ENCODE measurements at regions of chr9 and their contacts with region 1.

Region 1: GRCh38 chr9:111037381-111038305 is 627 bp downstream of the LPAR1 start:
- DNase-seq: no peak
- H3K4me3 Mint-ChIP-seq: no peak overlapping the region
- H3K27ac Mint-ChIP-seq: no peak overlapping the region
- H3K4me1 Mint-ChIP-seq: peaks cover 10% of the 10 kb centered on the region
- H3K27me3 Mint-ChIP-seq: peaks cover 32% of the 10 kb centered on the region

Region 2: DNA sequence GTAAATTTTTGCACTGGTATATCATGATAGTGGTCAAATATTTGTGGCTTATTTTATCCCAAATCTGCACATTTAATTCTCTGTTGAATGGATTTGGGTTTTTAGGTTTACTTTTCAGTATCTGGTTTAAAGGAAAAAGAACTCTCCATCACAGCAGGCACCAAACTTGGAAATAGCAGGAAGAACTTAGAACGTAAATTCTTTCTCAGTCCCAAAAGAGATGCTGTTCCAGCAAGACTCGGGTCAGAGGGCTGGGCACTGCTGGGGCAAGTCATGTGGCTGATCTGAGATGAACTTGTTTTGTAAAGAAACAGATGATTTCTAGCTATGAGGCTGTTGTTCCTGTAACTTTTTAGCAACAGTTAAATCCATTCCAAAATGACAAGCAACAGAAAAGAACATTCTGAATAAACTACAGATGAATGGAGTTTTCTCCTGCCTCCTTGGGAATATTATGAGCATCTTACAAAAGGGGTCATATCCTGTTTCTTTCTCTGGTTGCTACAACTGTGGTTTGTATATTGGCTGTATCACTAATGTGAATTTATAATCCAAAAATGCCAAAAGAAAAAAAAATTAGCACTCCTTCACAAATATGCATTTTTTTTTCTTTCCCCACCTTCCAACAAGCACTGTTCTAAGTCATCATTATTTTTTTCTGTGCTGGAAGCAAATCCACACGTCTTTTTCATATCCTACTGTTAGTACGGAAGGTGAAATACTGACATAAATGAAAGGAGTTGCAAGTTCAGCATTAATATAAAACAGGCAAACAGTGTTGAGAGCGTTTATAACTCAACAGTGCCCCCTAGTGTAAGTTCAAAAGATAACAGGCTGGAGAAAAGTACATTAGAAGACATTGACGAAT is 261.3 kb after region 1 on chr9:
- CTCF ChIA-PET with region 1: no interaction called
- POLR2A ChIA-PET with region 1: no interaction called
- intact Hi-C with region 1: loop called (anchors 5 kb)
- DNase-seq: no peak
- H3K4me3 Mint-ChIP-seq: no peak overlapping the region
- H3K27ac Mint-ChIP-seq: no peak overlapping the region
- H3K4me1 Mint-ChIP-seq: no peaks in the 10 kb centered on the region
- H3K27me3 Mint-ChIP-seq: peaks cover 3% of the 10 kb centered on the region